ENCODE measurements at regions of chr13 and their contacts with region 1.

Region 1: DNA sequence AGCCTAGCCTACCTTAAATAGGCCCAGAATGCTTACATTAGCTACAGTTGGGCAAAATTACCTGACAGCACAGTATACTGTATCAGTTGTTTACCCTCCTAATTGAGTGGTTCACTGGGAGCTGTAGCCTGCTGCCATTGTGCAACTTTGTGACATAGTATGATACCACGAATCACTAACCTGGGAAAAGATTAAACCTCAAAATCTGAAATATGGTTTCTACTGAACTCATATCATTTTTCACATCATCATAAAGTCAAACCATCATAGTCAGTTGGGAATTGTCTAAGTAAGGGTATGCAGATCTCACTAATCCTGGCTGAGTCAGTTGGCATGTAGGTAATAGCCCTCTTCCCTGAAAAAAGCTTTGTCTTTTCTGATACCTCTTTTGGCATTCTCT is 9.2 kb downstream of the PAN3 start:
- DNase-seq: no peak
- ATAC-seq: no peak
- H3K4me3 ChIP-seq: no peak overlapping the region
- H3K27ac ChIP-seq: no peak overlapping the region
- H3K4me1 ChIP-seq: peaks cover 16 to 22% of the 10 kb centered on the region in 2 donors
- H3K27me3 ChIP-seq: no peaks in the 10 kb centered on the region
- CTCF ChIP-seq: no peak
- POLR2A ChIP-seq: no peak

Region 2: GRCh38 chr13:27203854-27204253 is 943.6 kb before region 1 on chr13:
- in situ Hi-C with region 1: no loop called
- intact Hi-C with region 1: no loop called
- DNase-seq: no peak
- ATAC-seq: peak in 1 of 2 donors; percentile 12
- H3K4me3 ChIP-seq: no peak overlapping the region
- H3K27ac ChIP-seq: no peak overlapping the region
- H3K4me1 ChIP-seq: no peaks in the 10 kb centered on the region
- H3K27me3 ChIP-seq: no peaks in the 10 kb centered on the region
- CTCF ChIP-seq: peak in 1 of 5 experiments; percentile 19
- POLR2A ChIP-seq: no peak

Region 3: GRCh38 chr13:27264181-27264580 is 883.3 kb before region 1 on chr13:
- in situ Hi-C with region 1: loop called in 1 of 4 experiments (anchors 25 kb)
- intact Hi-C with region 1: loop called (anchors 10 kb)
- DNase-seq: no peak
- ATAC-seq: peak in 1 of 2 donors; percentile 32
- H3K4me3 ChIP-seq: no peak overlapping the region
- H3K27ac ChIP-seq: peak overlapping the region in 1 of 4 donors; percentile 8
- H3K4me1 ChIP-seq: peaks cover 4 to 21% of the 10 kb centered on the region in 2 donors
- H3K27me3 ChIP-seq: no peaks in the 10 kb centered on the region
- CTCF ChIP-seq: no peak
- POLR2A ChIP-seq: no peak

Region 4: GRCh38 chr13:27889471-27889870 is 258.0 kb before region 1 on chr13:
- in situ Hi-C with region 1: no loop called
- intact Hi-C with region 1: no loop called
- DNase-seq: no peak
- ATAC-seq: no peak
- H3K4me3 ChIP-seq: no peak overlapping the region
- H3K27ac ChIP-seq: no peak overlapping the region
- H3K4me1 ChIP-seq: no peaks in the 10 kb centered on the region
- H3K27me3 ChIP-seq: peaks cover 0 to 10% (median 0%) of the 10 kb centered on the region in 3 donors
- CTCF ChIP-seq: no peak
- POLR2A ChIP-seq: no peak

Region 5: GRCh38 chr13:28251466-28251865 is 104.0 kb after region 1 on chr13:
- in situ Hi-C with region 1: no loop called
- intact Hi-C with region 1: loop called (anchors 10 kb)
- DNase-seq: no peak
- ATAC-seq: no peak
- H3K4me3 ChIP-seq: no peak overlapping the region
- H3K27ac ChIP-seq: no peak overlapping the region
- H3K4me1 ChIP-seq: no peaks in the 10 kb centered on the region
- H3K27me3 ChIP-seq: no peaks in the 10 kb centered on the region
- CTCF ChIP-seq: no peak
- POLR2A ChIP-seq: no peak